CD14-positive monocyte (primary cell): ENCODE measurements at regions of chr17 and their contacts with region 1.

Region 1: DNA sequence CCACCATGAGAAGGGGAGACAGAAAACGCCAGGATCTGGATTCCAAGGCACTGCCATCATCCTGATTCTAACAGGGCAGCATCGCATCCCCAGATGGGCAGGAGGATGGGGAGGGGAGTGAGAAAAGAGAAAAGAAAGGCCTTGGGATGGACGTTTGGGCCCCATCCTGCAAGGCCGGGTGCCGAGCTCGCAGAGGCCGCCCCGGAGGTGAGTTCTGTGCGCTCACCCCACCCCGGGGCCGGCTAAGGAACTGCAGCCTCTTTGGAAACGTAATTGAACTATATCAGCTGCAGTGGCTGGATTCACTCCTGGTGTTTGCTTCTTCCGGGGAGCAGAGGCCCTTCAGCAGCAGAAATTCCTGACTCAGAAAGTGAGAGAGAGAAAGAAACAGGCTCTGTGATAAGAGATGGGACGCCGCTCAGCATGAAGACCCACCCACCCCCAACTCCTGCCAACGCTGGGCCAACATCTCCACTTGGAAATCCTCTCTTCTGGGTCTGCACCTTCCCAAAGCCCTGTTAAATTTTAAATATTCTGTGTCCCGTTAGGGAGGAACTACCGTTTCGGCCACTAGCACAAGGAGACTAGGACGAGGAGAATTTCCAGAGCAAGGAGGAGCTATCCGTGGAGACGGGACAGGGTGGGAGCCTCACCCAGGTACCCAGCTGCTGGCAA is 8.5 kb upstream of the SSTR2 start:
- DNase-seq: peak; percentile 51 to 72 (median 59)
- H3K4me3 ChIP-seq: no peak overlapping the region
- H3K4me3 Mint-ChIP-seq: peak overlapping the region in 1 of 2 donors; percentile 78
- H3K27ac ChIP-seq: no peak overlapping the region
- H3K27ac Mint-ChIP-seq: no peak overlapping the region
- H3K4me1 ChIP-seq: peaks cover 27 to 32% of the 10 kb centered on the region in 2 donors
- H3K4me1 Mint-ChIP-seq: peaks cover 25% of the 10 kb centered on the region
- H3K27me3 ChIP-seq: peaks cover 0 to 3% of the 10 kb centered on the region in 2 donors
- H3K27me3 Mint-ChIP-seq: peaks cover 14 to 19% (median 16%) of the 10 kb centered on the region in 3 donors
- CTCF ChIP-seq: peak; percentile 94

Region 2: GRCh38 chr17:72725433-72726068 is 430.8 kb before region 1 on chr17:
- intact Hi-C with region 1: loop called in 1 of 2 experiments (anchors 10 kb)
- DNase-seq: peak in 2 of 3 donors; percentile 15 to 16
- H3K4me3 ChIP-seq: no peak overlapping the region
- H3K4me3 Mint-ChIP-seq: no peak overlapping the region
- H3K27ac ChIP-seq: no peak overlapping the region
- H3K27ac Mint-ChIP-seq: peak overlapping the region in 2 of 7 donors; percentile 9 to 18
- H3K4me1 ChIP-seq: peaks cover 5 to 10% of the 10 kb centered on the region in 2 donors
- H3K4me1 Mint-ChIP-seq: peaks cover 21% of the 10 kb centered on the region
- H3K27me3 ChIP-seq: no peaks in the 10 kb centered on the region
- H3K27me3 Mint-ChIP-seq: no peaks in the 10 kb centered on the region
- CTCF ChIP-seq: peak; percentile 80

Region 3: DNA sequence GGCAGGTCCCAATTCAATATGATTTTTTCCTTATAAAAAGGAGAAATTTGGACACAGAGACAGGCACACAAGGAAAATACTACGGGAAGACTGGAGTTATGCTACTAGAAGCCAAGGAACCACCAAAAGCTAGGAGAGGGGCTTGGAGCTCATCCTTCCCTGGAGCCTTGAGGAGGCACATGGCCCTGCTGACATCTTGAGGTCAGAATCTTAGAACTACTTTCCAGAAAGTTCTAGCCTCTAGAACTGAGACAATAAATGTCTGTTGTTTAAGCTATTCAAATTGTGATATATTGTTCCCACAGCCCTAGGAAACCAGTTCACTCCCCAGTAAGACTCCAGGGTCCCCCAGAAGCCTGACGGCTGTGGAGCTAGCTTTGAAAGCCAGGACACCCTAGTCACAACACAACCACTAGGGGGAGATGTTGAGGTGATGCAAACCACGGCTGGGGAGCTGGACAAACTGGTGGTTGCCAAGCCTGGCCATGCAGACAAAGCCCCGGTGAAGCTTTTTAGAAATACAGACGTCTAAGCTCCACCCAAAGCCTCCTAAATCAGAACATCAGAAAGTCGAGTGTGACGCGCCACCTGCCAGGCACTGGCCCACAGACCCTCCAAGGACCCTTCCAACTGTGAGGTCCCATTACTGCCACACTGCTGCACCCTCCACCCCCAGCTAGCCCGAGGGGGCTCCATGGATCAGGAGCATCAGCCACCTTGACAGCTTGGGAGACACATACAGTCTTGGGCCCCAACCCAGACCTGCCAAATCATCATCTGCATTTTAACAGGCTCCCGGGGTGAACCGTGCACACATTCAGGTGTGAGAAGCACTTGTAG is 170.2 kb before region 1 on chr17:
- intact Hi-C with region 1: loop called (anchors 2 to 5 kb)
- DNase-seq: peak; percentile 59 to 75 (median 67)
- H3K4me3 ChIP-seq: no peak overlapping the region
- H3K4me3 Mint-ChIP-seq: no peak overlapping the region
- H3K27ac ChIP-seq: no peak overlapping the region
- H3K27ac Mint-ChIP-seq: peak overlapping the region in 2 of 7 donors; percentile 21 to 75
- H3K4me1 ChIP-seq: peaks cover 5 to 6% of the 10 kb centered on the region in 2 donors
- H3K4me1 Mint-ChIP-seq: peaks cover 16% of the 10 kb centered on the region
- H3K27me3 ChIP-seq: no peaks in the 10 kb centered on the region
- H3K27me3 Mint-ChIP-seq: peaks cover 0 to 2% (median 0%) of the 10 kb centered on the region in 3 donors
- CTCF ChIP-seq: peak; percentile 92